ENCODE measurements at regions of chrX and their contacts with region 1.

Region 1: DNA sequence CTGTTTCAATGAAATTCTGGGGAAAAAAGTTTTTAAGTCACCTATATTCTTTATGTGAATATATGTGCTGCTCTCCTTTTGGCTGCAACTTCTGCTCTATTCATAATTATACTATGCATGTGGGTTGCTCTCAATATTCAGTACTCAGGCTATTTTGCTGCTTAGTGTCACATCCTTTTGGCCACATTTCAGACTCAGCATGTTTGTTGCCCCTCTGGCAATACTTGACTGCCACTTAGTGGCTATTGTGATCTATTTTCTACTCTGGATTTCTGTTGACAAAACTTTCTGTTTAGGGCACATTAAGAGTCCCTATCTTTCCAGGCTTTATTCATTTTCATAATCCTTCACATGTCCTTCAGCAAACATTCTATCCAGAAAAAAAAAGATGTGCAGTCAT is 15.8 kb upstream of the CT45A1 start:
- DNase-seq: no peak
- H3K4me3 Mint-ChIP-seq: no peak overlapping the region
- H3K27ac Mint-ChIP-seq: no peak overlapping the region
- H3K4me1 Mint-ChIP-seq: no peaks in the 10 kb centered on the region
- H3K27me3 Mint-ChIP-seq: no peaks in the 10 kb centered on the region

Region 2: GRCh38 chrX:135484641-135485289 is 212.8 kb before region 1 on chrX:
- intact Hi-C with region 1: loop called (anchors 5 kb)
- DNase-seq: peak; percentile 70
- H3K4me3 Mint-ChIP-seq: no peak overlapping the region
- H3K27ac Mint-ChIP-seq: no peak overlapping the region
- H3K4me1 Mint-ChIP-seq: peaks cover 3% of the 10 kb centered on the region
- H3K27me3 Mint-ChIP-seq: peaks cover 3% of the 10 kb centered on the region

Region 3: GRCh38 chrX:135581496-135581895 is 116.1 kb before region 1 on chrX:
- intact Hi-C with region 1: no loop called
- DNase-seq: no peak
- H3K4me3 Mint-ChIP-seq: no peak overlapping the region
- H3K27ac Mint-ChIP-seq: no peak overlapping the region
- H3K4me1 Mint-ChIP-seq: peaks cover 2% of the 10 kb centered on the region
- H3K27me3 Mint-ChIP-seq: no peaks in the 10 kb centered on the region

Measured in activated CD4-positive, alpha-beta T cell treated with anti-CD3 and anti-CD28 coated beads, Interleukin-2, amount 10 ng/mL, durations not matched to agents 24 days and 14 days (primary cell).